CD8-positive, alpha-beta T cell (primary cell): ENCODE measurements at regions of chr10 and their contacts with region 1.

Region 1: DNA sequence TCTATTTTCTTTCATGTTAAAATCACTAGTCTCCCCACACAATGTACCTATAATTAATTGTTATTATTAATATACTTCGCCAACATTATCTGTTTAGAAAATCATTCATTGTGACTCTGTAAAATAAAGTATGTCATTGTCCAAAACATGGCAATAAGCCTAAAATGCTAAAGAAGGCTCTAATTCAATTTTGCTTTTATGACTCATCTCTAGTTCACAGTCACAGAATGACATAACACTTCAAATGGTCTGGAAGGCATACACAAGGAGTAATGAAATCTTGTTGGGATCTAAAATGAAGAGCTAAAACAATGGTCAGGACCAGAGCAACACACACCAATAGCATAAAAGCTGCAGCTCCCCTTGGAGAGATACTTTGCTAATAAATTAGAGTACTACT is 505.8 kb downstream of the GPAM start:
- DNase-seq: no peak
- ATAC-seq: no peak
- H3K4me3 ChIP-seq: no peak overlapping the region
- H3K4me3 Mint-ChIP-seq: no peak overlapping the region
- H3K27ac ChIP-seq: no peak overlapping the region
- H3K27ac Mint-ChIP-seq: no peak overlapping the region
- H3K4me1 ChIP-seq: no peaks in the 10 kb centered on the region
- H3K4me1 Mint-ChIP-seq: no peaks in the 10 kb centered on the region
- H3K27me3 ChIP-seq: no peaks in the 10 kb centered on the region
- H3K27me3 Mint-ChIP-seq: no peaks in the 10 kb centered on the region
- CTCF ChIP-seq: no peak

Region 2: GRCh38 chr10:111612273-111612672 is 65.5 kb before region 1 on chr10:
- CTCF ChIA-PET with region 1: no interaction called
- POLR2A ChIA-PET with region 1: no interaction called
- intact Hi-C with region 1: loop called in 1 of 2 experiments (anchors 1 kb)
- DNase-seq: no peak
- ATAC-seq: no peak
- H3K4me3 ChIP-seq: no peak overlapping the region
- H3K4me3 Mint-ChIP-seq: no peak overlapping the region
- H3K27ac ChIP-seq: no peak overlapping the region
- H3K27ac Mint-ChIP-seq: no peak overlapping the region
- H3K4me1 ChIP-seq: no peaks in the 10 kb centered on the region
- H3K4me1 Mint-ChIP-seq: no peaks in the 10 kb centered on the region
- H3K27me3 ChIP-seq: no peaks in the 10 kb centered on the region
- H3K27me3 Mint-ChIP-seq: no peaks in the 10 kb centered on the region
- CTCF ChIP-seq: no peak